SK-N-SH (cell line): ENCODE measurements at regions of chr6 and their contacts with region 1.

Region 1: GRCh38 chr6:20401205-20402091 is at the start of gene E2F3:
- DNase-seq: peak; percentile 96
- H3K4me3 ChIP-seq: peak within 1 kb of the TSS; percentile 83 to 86
- H3K27ac ChIP-seq: peak within 1 kb of the TSS; percentile 93 to 97
- H3K4me1 ChIP-seq: peaks cover 0 to 2% of the 10 kb centered on the region in 2 experiments; a peak in 1 of 4 replicates
- H3K27me3 ChIP-seq: no peaks in the 10 kb centered on the region
- CTCF ChIP-seq: no peak
- EP300 ChIP-seq: peak in 1 of 2 experiments; percentile 44; a peak in 1 of 4 replicates
- RAD21 ChIP-seq: no peak
- polyA plus RNA-seq, gene E2F3: 12.7 and 14.4 TPM in 2 replicates

Region 2: GRCh38 chr6:20319520-20320357 is 81.7 kb before region 1 on chr6:
- CTCF ChIA-PET with region 1: no interaction called
- POLR2A ChIA-PET with region 1: no interaction called
- DNase-seq: no peak
- H3K4me3 ChIP-seq: no peak overlapping the region
- H3K27ac ChIP-seq: no peak overlapping the region
- H3K4me1 ChIP-seq: no peaks in the 10 kb centered on the region
- H3K27me3 ChIP-seq: no peaks in the 10 kb centered on the region
- CTCF ChIP-seq: no peak
- EP300 ChIP-seq: no peak
- RAD21 ChIP-seq: no peak

Region 3: GRCh38 chr6:20340068-20340848 is 61.2 kb before region 1 on chr6:
- CTCF ChIA-PET with region 1: no interaction called
- POLR2A ChIA-PET with region 1: no interaction called
- DNase-seq: no peak
- H3K4me3 ChIP-seq: no peak overlapping the region
- H3K27ac ChIP-seq: no peak overlapping the region
- H3K4me1 ChIP-seq: no peaks in the 10 kb centered on the region
- H3K27me3 ChIP-seq: no peaks in the 10 kb centered on the region
- CTCF ChIP-seq: no peak
- EP300 ChIP-seq: no peak
- RAD21 ChIP-seq: no peak

Region 4: DNA sequence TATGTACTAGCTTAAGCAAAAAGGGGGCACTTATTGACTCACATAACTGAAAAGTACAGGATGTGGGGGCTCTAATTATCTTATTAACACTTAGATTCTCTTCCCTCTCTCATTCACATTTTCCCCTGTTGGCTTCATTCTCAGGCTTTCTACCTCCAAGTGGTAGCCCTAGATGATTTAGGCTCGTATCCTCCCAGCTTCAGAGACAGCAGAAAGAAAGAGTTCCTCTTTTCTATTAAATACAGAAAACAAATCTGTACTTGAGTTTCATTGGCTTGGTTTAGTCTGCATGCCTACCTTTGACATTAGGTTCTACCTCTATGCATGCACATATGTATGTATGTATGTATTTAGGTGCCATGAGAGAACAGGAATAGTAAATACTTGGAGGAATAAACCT is 15.2 kb before region 1 on chr6:
- CTCF ChIA-PET with region 1: interaction called, 10 read pairs
- POLR2A ChIA-PET with region 1: no interaction called
- DNase-seq: no peak
- H3K4me3 ChIP-seq: no peak overlapping the region
- H3K27ac ChIP-seq: no peak overlapping the region
- H3K4me1 ChIP-seq: no peaks in the 10 kb centered on the region
- H3K27me3 ChIP-seq: no peaks in the 10 kb centered on the region
- CTCF ChIP-seq: no peak
- EP300 ChIP-seq: no peak
- RAD21 ChIP-seq: no peak

Region 5: DNA sequence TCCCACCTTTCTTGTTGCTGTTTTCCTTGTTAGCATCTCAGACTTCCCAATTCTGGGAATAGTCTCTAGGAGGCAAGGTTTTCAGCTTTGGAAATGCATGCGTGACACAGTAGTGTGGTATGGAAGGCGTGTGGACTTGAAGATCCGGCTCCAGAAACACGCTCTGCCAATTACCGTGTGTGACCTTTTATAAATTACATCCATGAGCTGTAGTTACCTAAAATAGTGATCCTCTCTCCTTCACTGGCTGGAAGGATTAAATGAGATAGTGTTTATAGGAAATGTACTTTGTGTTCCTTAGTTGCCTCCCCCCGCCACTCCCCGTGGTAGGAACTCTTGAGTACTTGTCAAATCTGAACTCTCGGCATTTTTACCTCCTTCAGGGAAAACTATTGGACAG is 13.3 kb after region 1 on chr6:
- CTCF ChIA-PET with region 1: interaction called, 11 read pairs
- POLR2A ChIA-PET with region 1: interaction called, 3 read pairs
- DNase-seq: no peak
- H3K4me3 ChIP-seq: no peak overlapping the region
- H3K27ac ChIP-seq: no peak overlapping the region
- H3K4me1 ChIP-seq: peaks cover 5 to 7% of the 10 kb centered on the region in 2 experiments; a peak in 2 of 4 replicates
- H3K27me3 ChIP-seq: no peaks in the 10 kb centered on the region
- CTCF ChIP-seq: no peak
- EP300 ChIP-seq: no peak
- RAD21 ChIP-seq: no peak

Region 6: DNA sequence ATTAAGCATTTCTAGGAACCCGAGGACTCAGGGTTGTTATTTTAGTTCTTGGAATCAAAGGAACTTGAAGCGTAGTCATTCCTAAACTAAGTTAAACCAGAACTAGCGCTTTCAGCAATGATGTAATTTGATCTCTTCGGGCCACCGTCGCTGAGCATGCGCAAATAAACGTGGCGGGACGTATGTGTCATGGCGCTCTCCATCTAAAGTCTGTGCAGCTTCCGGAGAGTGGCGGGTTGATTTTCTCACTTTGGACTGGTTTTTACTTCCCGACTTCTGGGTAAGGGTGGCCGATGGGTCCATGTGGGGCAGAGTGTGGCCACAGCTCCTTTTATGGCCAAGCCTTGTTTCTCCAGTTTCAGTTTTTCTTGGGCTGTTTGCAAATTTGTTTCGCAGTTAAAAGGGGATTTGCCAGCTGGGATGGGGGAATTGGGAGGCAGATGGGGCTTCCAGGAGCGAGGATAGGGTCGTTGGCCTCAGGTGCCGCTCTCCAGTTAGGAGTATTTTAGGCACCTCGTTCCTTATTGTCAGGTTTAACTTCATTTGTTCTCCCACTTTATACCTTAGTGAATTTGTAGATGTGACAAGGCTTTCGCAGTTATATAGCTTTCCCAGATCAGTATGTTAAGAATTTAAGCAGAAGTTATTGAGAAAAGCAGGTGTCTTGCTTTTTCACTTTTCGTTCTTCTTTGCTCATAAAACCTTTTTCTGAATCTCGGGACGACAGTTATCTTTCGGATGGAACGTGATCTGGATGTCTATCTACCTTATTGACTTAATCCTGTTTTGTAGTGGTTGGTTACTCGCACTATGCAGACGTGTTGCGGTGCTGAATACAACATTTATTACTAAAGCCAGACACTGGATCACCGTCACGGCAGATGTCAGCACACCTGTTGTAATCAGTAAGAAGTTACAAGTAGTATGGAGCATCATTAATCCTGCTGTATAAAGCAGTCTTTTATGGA is 133.1 kb after region 1 on chr6 and contains the start of gene CDKAL1:
- CTCF ChIA-PET with region 1: interaction called, 26 read pairs
- POLR2A ChIA-PET with region 1: no interaction called
- DNase-seq: peak; percentile 69
- H3K4me3 ChIP-seq: peak within 1 kb of the TSS; percentile 75 to 79
- H3K27ac ChIP-seq: peak within 1 kb of the TSS; percentile 75 to 88
- H3K4me1 ChIP-seq: peaks cover 4 to 5% of the 10 kb centered on the region in 2 experiments; a peak in 3 of 4 replicates
- H3K27me3 ChIP-seq: no peaks in the 10 kb centered on the region
- CTCF ChIP-seq: no peak
- EP300 ChIP-seq: no peak; a peak in 1 of 4 replicates
- RAD21 ChIP-seq: no peak
- polyA plus RNA-seq, gene CDKAL1: 2.6 and 3.8 TPM in 2 replicates